ENCODE measurements at regions of chr15 and their contacts with region 1.

Region 1: GRCh38 chr15:98853161-98853560 is 154.4 kb downstream of the PGPEP1L start:
- DNase-seq: peak; percentile 94
- H3K4me3 ChIP-seq: peak overlapping the region; percentile 47 to 60 (median 57)
- H3K27ac ChIP-seq: peak overlapping the region; percentile 86 to 91 (median 89)
- H3K4me1 ChIP-seq: peaks cover 2 to 84% (median 76%) of the 10 kb centered on the region in 4 donors
- H3K27me3 ChIP-seq: no peaks in the 10 kb centered on the region
- CTCF ChIP-seq: no peak
- EP300 ChIP-seq: peak in 1 of 4 donors; percentile 56
- POLR2A ChIP-seq: peak in 1 of 2 donors; percentile 25

Region 2: GRCh38 chr15:98548154-98548971 is 304.8 kb before region 1 on chr15:
- intact Hi-C with region 1: loop called (anchors 1 kb)
- DNase-seq: peak; percentile 93
- H3K4me3 ChIP-seq: peak overlapping the region; percentile 39 to 60 (median 54)
- H3K27ac ChIP-seq: peak overlapping the region; percentile 86 to 94 (median 92)
- H3K4me1 ChIP-seq: peaks cover 0 to 27% (median 16%) of the 10 kb centered on the region in 4 donors
- H3K27me3 ChIP-seq: no peaks in the 10 kb centered on the region
- CTCF ChIP-seq: peak in 2 of 4 experiments; percentile 14 to 22
- EP300 ChIP-seq: peak in 1 of 4 donors; percentile 73
- POLR2A ChIP-seq: peak; percentile 29 to 31

Region 3: DNA sequence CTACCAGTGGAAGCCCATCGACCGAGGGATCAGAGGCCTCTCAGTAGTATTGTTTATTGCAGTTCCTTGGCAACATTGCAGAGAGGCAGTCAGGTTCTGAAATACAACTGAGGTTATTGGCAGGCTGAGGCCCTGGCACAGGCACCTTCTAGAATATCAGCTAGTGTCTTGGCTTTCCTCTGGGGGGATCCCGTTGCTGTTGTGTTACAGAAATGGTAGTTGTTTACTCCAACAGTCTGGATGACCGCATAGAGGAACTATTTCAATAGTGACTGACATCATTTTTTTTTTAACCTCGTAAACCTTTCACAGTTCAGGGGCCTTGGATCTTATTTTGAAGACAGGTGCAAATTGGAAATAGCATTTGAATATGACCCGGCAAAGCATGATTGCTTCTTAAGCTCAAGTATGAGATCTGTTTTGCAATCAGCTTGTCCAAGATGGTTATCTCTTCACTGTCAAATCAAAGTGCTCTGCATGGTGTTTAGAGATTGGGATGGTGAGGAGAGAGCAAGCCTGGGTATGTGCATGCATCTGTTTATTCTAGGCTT is 90.5 kb after region 1 on chr15:
- intact Hi-C with region 1: loop called (anchors 2 kb)
- DNase-seq: no peak
- H3K4me3 ChIP-seq: no peak overlapping the region
- H3K27ac ChIP-seq: peak overlapping the region; percentile 62 to 85 (median 76)
- H3K4me1 ChIP-seq: peaks cover 0 to 51% (median 45%) of the 10 kb centered on the region in 4 donors
- H3K27me3 ChIP-seq: no peaks in the 10 kb centered on the region
- CTCF ChIP-seq: no peak
- EP300 ChIP-seq: peak in 1 of 4 donors; percentile 26
- POLR2A ChIP-seq: no peak

Measured in sigmoid colon (tissue), 7 donors.